IMR-90 (cell line): ENCODE measurements at regions of chr3 and their contacts with region 1.

Region 1: GRCh38 chr3:151439652-151440129 is 21.2 kb downstream of the IGSF10 start:
- DNase-seq: peak; percentile 78
- ATAC-seq: peak; percentile 97
- H3K4me3 ChIP-seq: no peak overlapping the region
- H3K27ac ChIP-seq: no peak overlapping the region
- H3K4me1 ChIP-seq: no peaks in the 10 kb centered on the region; the same call in 1 of the 2 replicates
- H3K27me3 ChIP-seq: no peaks in the 10 kb centered on the region
- CTCF ChIP-seq: peak; percentile 77
- POLR2A ChIP-seq: no peak
- RAD21 ChIP-seq: peak; percentile 74

Region 2: GRCh38 chr3:151168269-151169094 is 271.2 kb before region 1 on chr3:
- CTCF ChIA-PET with region 1: no interaction called
- POLR2A ChIA-PET with region 1: no interaction called
- dilution Hi-C with region 1: no loop called
- in situ Hi-C with region 1: no loop called
- intact Hi-C with region 1: loop called (anchors 10 kb)
- DNase-seq: peak; percentile 67
- ATAC-seq: peak; percentile 90
- H3K4me3 ChIP-seq: no peak overlapping the region
- H3K27ac ChIP-seq: no peak overlapping the region
- H3K4me1 ChIP-seq: no peaks in the 10 kb centered on the region
- H3K27me3 ChIP-seq: no peaks in the 10 kb centered on the region
- CTCF ChIP-seq: peak; percentile 84
- POLR2A ChIP-seq: no peak
- RAD21 ChIP-seq: peak; percentile 93

Region 3: DNA sequence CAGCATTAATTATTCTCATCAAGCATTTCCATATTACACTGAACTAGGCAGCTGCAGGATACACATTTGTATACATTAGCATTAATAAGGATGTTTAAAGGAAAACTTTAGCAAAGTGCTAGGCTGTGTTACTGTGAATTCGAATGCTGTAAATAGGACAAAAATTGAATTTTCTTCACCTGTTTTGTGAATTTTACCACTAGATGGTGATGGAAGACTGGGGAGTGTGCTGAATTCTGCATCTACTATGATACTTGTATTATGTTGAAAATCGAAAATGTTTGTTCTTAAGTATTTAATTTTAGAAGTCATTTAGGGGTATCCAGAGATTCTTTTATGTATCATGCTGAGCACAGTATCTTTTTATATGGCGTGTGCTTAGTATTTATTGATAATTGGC is 149.0 kb before region 1 on chr3:
- CTCF ChIA-PET with region 1: no interaction called
- POLR2A ChIA-PET with region 1: no interaction called
- dilution Hi-C with region 1: no loop called
- in situ Hi-C with region 1: loop called (anchors 5 kb)
- intact Hi-C with region 1: loop called (anchors 1 kb)
- DNase-seq: peak; percentile 66
- ATAC-seq: peak; percentile 72
- H3K4me3 ChIP-seq: no peak overlapping the region
- H3K27ac ChIP-seq: no peak overlapping the region
- H3K4me1 ChIP-seq: no peaks in the 10 kb centered on the region
- H3K27me3 ChIP-seq: no peaks in the 10 kb centered on the region
- CTCF ChIP-seq: peak; percentile 87
- POLR2A ChIP-seq: no peak
- RAD21 ChIP-seq: peak; percentile 93

Region 4: DNA sequence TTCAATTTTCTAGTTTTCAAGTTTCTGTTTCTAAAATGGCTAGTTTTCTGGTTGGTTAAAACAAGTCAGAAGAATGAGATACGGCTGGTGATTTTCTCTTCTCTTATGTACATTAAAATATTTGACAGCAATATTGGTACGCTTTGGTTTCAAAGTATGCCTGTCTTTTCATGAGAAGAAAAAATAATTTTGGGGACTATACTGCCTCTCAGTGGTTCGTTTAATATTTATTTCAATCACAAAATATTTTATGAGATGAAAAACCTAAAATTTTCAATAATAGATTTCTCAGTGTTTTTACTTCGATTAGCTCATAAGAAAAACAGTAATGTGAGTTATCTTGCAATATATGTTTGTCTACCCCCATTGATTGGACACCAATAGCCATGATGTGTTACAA is 221.2 kb after region 1 on chr3:
- CTCF ChIA-PET with region 1: no interaction called
- POLR2A ChIA-PET with region 1: no interaction called
- dilution Hi-C with region 1: no loop called
- in situ Hi-C with region 1: no loop called
- intact Hi-C with region 1: loop called (anchors 1 kb)
- DNase-seq: no peak
- ATAC-seq: no peak
- H3K4me3 ChIP-seq: no peak overlapping the region
- H3K27ac ChIP-seq: no peak overlapping the region
- H3K4me1 ChIP-seq: no peaks in the 10 kb centered on the region
- H3K27me3 ChIP-seq: no peaks in the 10 kb centered on the region; the same call in 1 of the 2 replicates
- CTCF ChIP-seq: 0 out of 2 replicates have a peak, but pooled peaks have one; percentile 22
- POLR2A ChIP-seq: no peak
- RAD21 ChIP-seq: no peak

Region 5: DNA sequence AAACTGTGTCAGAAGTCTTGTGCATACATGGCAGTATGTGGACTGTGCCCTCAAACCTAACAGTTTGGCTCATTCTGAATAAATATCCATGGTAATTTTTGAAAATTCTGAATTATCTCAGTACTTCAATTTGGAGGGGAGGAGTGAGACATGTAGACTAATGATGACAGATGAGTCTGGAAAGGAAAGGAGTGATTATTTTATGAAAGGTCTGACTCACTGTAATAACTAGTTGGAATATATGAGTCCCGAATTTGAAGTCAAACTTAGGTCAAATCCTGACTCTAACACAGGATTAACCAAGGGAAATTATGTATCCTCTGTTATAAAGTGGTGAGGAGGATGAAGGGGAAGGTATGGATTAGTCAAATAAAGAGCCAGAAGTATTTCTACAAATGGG is 472.3 kb after region 1 on chr3:
- CTCF ChIA-PET with region 1: interaction called, 5 read pairs
- POLR2A ChIA-PET with region 1: no interaction called
- dilution Hi-C with region 1: no loop called
- in situ Hi-C with region 1: loop called (anchors 5 kb)
- intact Hi-C with region 1: no loop called
- DNase-seq: peak; percentile 54
- ATAC-seq: no peak
- H3K4me3 ChIP-seq: no peak overlapping the region
- H3K27ac ChIP-seq: no peak overlapping the region
- H3K4me1 ChIP-seq: peaks cover 5% of the 10 kb centered on the region; the same call in 1 of the 2 replicates
- H3K27me3 ChIP-seq: no peaks in the 10 kb centered on the region
- CTCF ChIP-seq: no peak
- POLR2A ChIP-seq: no peak
- RAD21 ChIP-seq: no peak